B cell (primary cell): ENCODE measurements at regions of chr20 and their contacts with region 1.

Region 1: GRCh38 chr20:35092524-35093266 is at the start of gene TRPC4AP:
- DNase-seq: peak; percentile 95
- ATAC-seq: peak; percentile 98
- H3K4me3 ChIP-seq: peak within 1 kb of the TSS; percentile 77 to 98 (median 86)
- H3K4me3 Mint-ChIP-seq: peak within 1 kb of the TSS; percentile 97
- H3K27ac ChIP-seq: peak within 1 kb of the TSS; percentile 58 to 89
- H3K27ac Mint-ChIP-seq: peak within 1 kb of the TSS; percentile 95
- H3K4me1 ChIP-seq: peaks cover 16 to 22% of the 10 kb centered on the region in 2 donors
- H3K4me1 Mint-ChIP-seq: peaks cover 47% of the 10 kb centered on the region
- H3K27me3 ChIP-seq: no peaks in the 10 kb centered on the region
- H3K27me3 Mint-ChIP-seq: no peaks in the 10 kb centered on the region
- CTCF ChIP-seq: peak; percentile 91
- total RNA-seq, gene TRPC4AP: 73.2 and 73.9 TPM in 2 replicates

Region 2: DNA sequence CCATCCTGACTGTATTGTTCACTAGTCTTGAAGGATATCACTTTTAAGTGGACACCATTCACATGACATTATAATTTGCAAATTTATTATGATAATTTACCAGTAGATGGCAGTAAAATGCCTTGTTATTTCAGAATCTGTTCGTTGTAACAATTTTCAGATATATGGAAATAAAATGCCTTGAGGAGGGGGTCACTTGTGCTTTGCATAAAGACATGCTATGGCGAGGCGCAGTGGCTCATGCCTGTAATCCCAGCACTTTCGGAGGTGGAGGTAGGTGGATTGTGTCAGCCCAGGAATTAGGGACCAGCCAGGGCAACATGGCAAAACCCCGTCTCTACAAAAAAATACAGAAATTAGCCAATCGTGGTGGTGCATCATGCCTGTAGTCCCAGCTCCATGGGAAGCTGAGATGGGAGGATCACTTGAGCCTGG is 258.2 kb before region 1 on chr20:
- CTCF ChIA-PET with region 1: interaction called, 20 read pairs
- POLR2A ChIA-PET with region 1: no interaction called
- intact Hi-C with region 1: loop called (anchors 1 kb)
- DNase-seq: peak; percentile 65
- ATAC-seq: no peak
- H3K4me3 ChIP-seq: no peak overlapping the region
- H3K4me3 Mint-ChIP-seq: no peak overlapping the region
- H3K27ac ChIP-seq: no peak overlapping the region
- H3K27ac Mint-ChIP-seq: peak overlapping the region; percentile 42
- H3K4me1 ChIP-seq: no peaks in the 10 kb centered on the region
- H3K4me1 Mint-ChIP-seq: peaks cover 1% of the 10 kb centered on the region
- H3K27me3 ChIP-seq: peaks cover 0 to 4% (median 0%) of the 10 kb centered on the region in 4 experiments
- H3K27me3 Mint-ChIP-seq: peaks cover 30% of the 10 kb centered on the region
- CTCF ChIP-seq: peak; percentile 77

Region 3: GRCh38 chr20:35055445-35056276 is 37.0 kb before region 1 on chr20:
- CTCF ChIA-PET with region 1: interaction called, 10 read pairs
- POLR2A ChIA-PET with region 1: no interaction called
- intact Hi-C with region 1: no loop called
- DNase-seq: no peak
- ATAC-seq: peak; percentile 17
- H3K4me3 ChIP-seq: peak overlapping the region in 1 of 5 experiments; percentile 5
- H3K4me3 Mint-ChIP-seq: peak overlapping the region; percentile 73
- H3K27ac ChIP-seq: peak overlapping the region in 1 of 2 donors; percentile 42
- H3K27ac Mint-ChIP-seq: peak overlapping the region; percentile 66
- H3K4me1 ChIP-seq: peaks cover 0 to 5% of the 10 kb centered on the region in 2 donors
- H3K4me1 Mint-ChIP-seq: peaks cover 21% of the 10 kb centered on the region
- H3K27me3 ChIP-seq: no peaks in the 10 kb centered on the region
- H3K27me3 Mint-ChIP-seq: no peaks in the 10 kb centered on the region
- CTCF ChIP-seq: no peak

Region 4: DNA sequence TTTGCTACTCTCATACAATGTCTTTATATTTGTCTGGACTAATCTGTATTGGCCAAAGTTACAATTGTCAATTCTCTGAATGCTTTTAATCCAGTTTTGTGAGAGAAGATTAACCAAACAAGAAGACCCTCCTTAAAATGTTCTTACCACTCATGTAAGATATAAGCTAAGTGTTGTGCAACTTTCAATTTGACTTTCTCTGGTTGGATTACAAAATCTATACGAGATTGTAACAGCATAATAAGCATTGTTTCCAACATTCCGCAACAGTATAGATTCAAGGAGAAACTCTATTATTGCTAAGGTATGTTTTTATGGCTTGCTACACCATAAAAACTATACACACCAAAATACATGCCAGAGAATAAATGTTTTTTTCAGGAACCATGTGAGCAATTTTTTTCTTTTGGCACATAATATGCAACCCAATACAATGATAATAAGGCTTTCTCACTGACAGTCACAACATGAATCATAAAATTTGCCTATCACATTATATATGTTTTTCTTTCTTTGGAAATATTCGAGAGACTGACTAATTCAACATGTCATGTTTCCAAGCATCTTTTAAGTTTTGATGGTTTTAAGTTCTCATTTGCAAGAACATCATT is 12.1 kb after region 1 on chr20:
- CTCF ChIA-PET with region 1: interaction called, 17 read pairs
- POLR2A ChIA-PET with region 1: no interaction called
- intact Hi-C with region 1: no loop called
- DNase-seq: no peak
- ATAC-seq: no peak
- H3K4me3 ChIP-seq: no peak overlapping the region
- H3K4me3 Mint-ChIP-seq: no peak overlapping the region
- H3K27ac ChIP-seq: no peak overlapping the region
- H3K27ac Mint-ChIP-seq: no peak overlapping the region
- H3K4me1 ChIP-seq: no peaks in the 10 kb centered on the region
- H3K4me1 Mint-ChIP-seq: no peaks in the 10 kb centered on the region
- H3K27me3 ChIP-seq: no peaks in the 10 kb centered on the region
- H3K27me3 Mint-ChIP-seq: peaks cover 7% of the 10 kb centered on the region
- CTCF ChIP-seq: no peak

Region 5: GRCh38 chr20:35146920-35147574 is 54.4 kb after region 1 on chr20 and contains the start of gene EDEM2:
- CTCF ChIA-PET with region 1: interaction called, 27 read pairs
- POLR2A ChIA-PET with region 1: interaction called, 9 read pairs
- intact Hi-C with region 1: loop called (anchors 1 kb)
- DNase-seq: peak; percentile 95
- ATAC-seq: peak; percentile 80
- H3K4me3 ChIP-seq: peak within 1 kb of the TSS; percentile 69 to 94 (median 90)
- H3K4me3 Mint-ChIP-seq: peak within 1 kb of the TSS; percentile 96
- H3K27ac ChIP-seq: peak within 1 kb of the TSS; percentile 79 to 89
- H3K27ac Mint-ChIP-seq: peak within 1 kb of the TSS; percentile 94
- H3K4me1 ChIP-seq: peaks cover 33 to 43% of the 10 kb centered on the region in 2 donors
- H3K4me1 Mint-ChIP-seq: peaks cover 36% of the 10 kb centered on the region
- H3K27me3 ChIP-seq: no peaks in the 10 kb centered on the region
- H3K27me3 Mint-ChIP-seq: no peaks in the 10 kb centered on the region
- CTCF ChIP-seq: no peak
- total RNA-seq, gene EDEM2: 28.1 and 28.6 TPM in 2 replicates

Region 6: GRCh38 chr20:35181731-35182130 is 89.0 kb after region 1 on chr20:
- CTCF ChIA-PET with region 1: no interaction called
- POLR2A ChIA-PET with region 1: no interaction called
- intact Hi-C with region 1: no loop called
- DNase-seq: no peak
- ATAC-seq: no peak
- H3K4me3 ChIP-seq: no peak overlapping the region
- H3K4me3 Mint-ChIP-seq: no peak overlapping the region
- H3K27ac ChIP-seq: no peak overlapping the region
- H3K27ac Mint-ChIP-seq: no peak overlapping the region
- H3K4me1 ChIP-seq: no peaks in the 10 kb centered on the region
- H3K4me1 Mint-ChIP-seq: no peaks in the 10 kb centered on the region
- H3K27me3 ChIP-seq: no peaks in the 10 kb centered on the region
- H3K27me3 Mint-ChIP-seq: peaks cover 5% of the 10 kb centered on the region
- CTCF ChIP-seq: no peak

Region 7: GRCh38 chr20:35207950-35208611 is 115.4 kb after region 1 on chr20:
- CTCF ChIA-PET with region 1: interaction called, 95 read pairs
- POLR2A ChIA-PET with region 1: interaction called, 3 read pairs
- intact Hi-C with region 1: loop called (anchors 1 kb)
- DNase-seq: peak; percentile 81
- ATAC-seq: peak; percentile 84
- H3K4me3 ChIP-seq: no peak overlapping the region
- H3K4me3 Mint-ChIP-seq: no peak overlapping the region
- H3K27ac ChIP-seq: no peak overlapping the region
- H3K27ac Mint-ChIP-seq: no peak overlapping the region
- H3K4me1 ChIP-seq: no peaks in the 10 kb centered on the region
- H3K4me1 Mint-ChIP-seq: no peaks in the 10 kb centered on the region
- H3K27me3 ChIP-seq: no peaks in the 10 kb centered on the region
- H3K27me3 Mint-ChIP-seq: no peaks in the 10 kb centered on the region
- CTCF ChIP-seq: peak; percentile 87

Region 8: GRCh38 chr20:35284267-35284991 is 191.7 kb after region 1 on chr20 and contains the start of gene EIF6:
- CTCF ChIA-PET with region 1: no interaction called
- POLR2A ChIA-PET with region 1: interaction called, 4 read pairs
- intact Hi-C with region 1: loop called (anchors 1 kb)
- DNase-seq: peak; percentile 83
- ATAC-seq: peak; percentile 92
- H3K4me3 ChIP-seq: peak within 1 kb of the TSS; percentile 59 to 97 (median 93)
- H3K4me3 Mint-ChIP-seq: peak within 1 kb of the TSS; percentile 95
- H3K27ac ChIP-seq: peak within 1 kb of the TSS; percentile 71 to 90
- H3K27ac Mint-ChIP-seq: peak within 1 kb of the TSS; percentile 96
- H3K4me1 ChIP-seq: peaks cover 13 to 19% of the 10 kb centered on the region in 2 donors
- H3K4me1 Mint-ChIP-seq: peaks cover 32% of the 10 kb centered on the region
- H3K27me3 ChIP-seq: no peaks in the 10 kb centered on the region
- H3K27me3 Mint-ChIP-seq: no peaks in the 10 kb centered on the region
- CTCF ChIP-seq: no peak
- total RNA-seq, gene EIF6: 74.0 and 81.2 TPM in 2 replicates

Region 9: GRCh38 chr20:35359335-35359950 is 266.7 kb after region 1 on chr20:
- CTCF ChIA-PET with region 1: no interaction called
- POLR2A ChIA-PET with region 1: no interaction called
- intact Hi-C with region 1: no loop called
- DNase-seq: no peak
- ATAC-seq: no peak
- H3K4me3 ChIP-seq: no peak overlapping the region
- H3K4me3 Mint-ChIP-seq: no peak overlapping the region
- H3K27ac ChIP-seq: no peak overlapping the region
- H3K27ac Mint-ChIP-seq: no peak overlapping the region
- H3K4me1 ChIP-seq: no peaks in the 10 kb centered on the region
- H3K4me1 Mint-ChIP-seq: no peaks in the 10 kb centered on the region
- H3K27me3 ChIP-seq: no peaks in the 10 kb centered on the region
- H3K27me3 Mint-ChIP-seq: no peaks in the 10 kb centered on the region
- CTCF ChIP-seq: no peak